ENCODE measurements at regions of chr9 and their contacts with region 1.

Region 1: DNA sequence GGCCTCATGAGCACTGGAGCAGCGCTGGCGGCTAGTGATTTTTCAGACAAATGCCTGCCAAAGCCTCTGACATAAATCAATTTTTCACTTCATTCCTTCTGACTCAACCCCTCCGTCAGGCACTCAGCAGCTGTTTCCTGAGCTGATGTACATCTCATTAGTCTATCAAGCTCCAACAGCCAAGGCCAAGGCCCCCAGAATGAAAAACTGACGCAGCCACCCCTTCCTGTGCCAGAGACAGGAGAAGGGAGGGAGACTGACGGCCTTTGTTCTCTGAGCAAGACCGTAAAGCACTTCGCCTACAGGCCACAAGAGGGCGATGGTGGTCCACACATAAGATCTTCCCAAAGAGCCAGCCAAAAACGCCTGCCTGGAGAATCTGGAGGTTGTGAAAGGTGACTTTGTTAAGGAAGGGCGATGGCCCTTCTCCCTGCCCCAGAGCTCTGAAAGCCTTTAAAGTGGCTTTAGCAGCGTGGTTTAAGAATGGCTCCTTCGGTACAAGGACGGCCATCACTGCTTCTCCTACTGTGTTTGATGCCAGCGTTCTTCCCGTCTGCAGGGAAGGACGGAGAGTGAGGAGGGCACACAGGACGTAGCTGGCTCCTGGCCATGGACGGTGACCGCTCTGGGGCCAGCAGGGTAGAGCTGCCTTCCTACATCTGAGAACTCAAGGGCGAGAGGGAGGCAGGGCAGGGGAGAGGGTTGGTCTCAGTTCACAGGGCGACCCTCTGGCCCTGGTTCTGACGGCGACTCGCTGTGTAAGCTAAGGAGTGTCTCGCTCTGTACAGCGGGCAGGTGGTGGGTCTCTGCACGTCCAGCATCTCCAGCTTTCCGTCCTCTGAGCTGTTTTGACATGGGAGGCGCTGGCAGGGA is 37.0 kb downstream of the ALG2 start:
- DNase-seq: peak; percentile 56 to 90 (median 80)
- ATAC-seq: peak; percentile 96
- H3K4me3 ChIP-seq: peak overlapping the region in 1 of 2 experiments; percentile 18
- H3K4me3 Mint-ChIP-seq: peak overlapping the region; percentile 41
- H3K27ac ChIP-seq: no peak overlapping the region
- H3K27ac Mint-ChIP-seq: peak overlapping the region; percentile 29
- H3K4me1 ChIP-seq: peaks cover 6% of the 10 kb centered on the region
- H3K4me1 Mint-ChIP-seq: peaks cover 15% of the 10 kb centered on the region
- H3K27me3 ChIP-seq: no peaks in the 10 kb centered on the region
- H3K27me3 Mint-ChIP-seq: no peaks in the 10 kb centered on the region
- CTCF ChIP-seq: peak; percentile 89

Region 2: DNA sequence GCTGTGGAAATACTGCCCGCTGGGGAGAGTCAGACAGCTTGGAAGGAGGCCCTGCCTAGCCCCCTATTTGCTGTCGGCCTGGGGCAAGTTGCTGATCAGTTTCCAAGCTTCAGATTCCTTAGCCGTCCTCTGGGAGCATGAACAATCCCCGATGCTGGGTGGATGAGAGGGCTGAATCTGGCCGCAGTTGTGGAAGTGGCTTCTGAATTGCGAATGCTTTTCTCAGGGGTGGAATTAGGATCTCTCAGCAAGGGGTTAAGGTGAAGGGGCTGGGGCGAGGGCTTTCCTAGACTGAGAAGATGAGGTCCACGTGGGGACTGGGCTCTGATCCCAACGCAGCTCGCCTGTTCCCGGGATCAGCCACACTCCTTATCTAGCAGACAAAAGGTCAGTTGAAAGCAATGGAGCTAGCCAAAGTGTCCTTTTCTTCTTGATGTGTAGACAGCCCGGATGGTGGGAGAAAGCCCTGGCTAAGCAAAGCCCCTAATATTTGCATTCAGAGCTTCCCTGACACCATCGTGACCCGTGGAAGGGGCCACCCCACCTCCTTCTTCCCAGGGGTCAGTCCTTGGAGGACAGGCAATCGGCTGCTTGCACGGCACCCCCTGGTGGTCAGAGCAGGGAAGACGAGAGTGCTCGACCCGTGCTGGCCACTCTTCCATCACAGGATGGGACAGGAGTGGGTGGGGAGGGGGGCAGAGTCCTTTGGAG is 186.1 kb before region 1 on chr9:
- CTCF ChIA-PET with region 1: interaction called, 14 read pairs
- POLR2A ChIA-PET with region 1: no interaction called
- intact Hi-C with region 1: loop called in 1 of 2 experiments (anchors 1 kb)
- DNase-seq: peak in 8 of 9 experiments; percentile 17 to 67 (median 60)
- ATAC-seq: peak; percentile 59
- H3K4me3 ChIP-seq: no peak overlapping the region
- H3K4me3 Mint-ChIP-seq: no peak overlapping the region
- H3K27ac ChIP-seq: no peak overlapping the region
- H3K27ac Mint-ChIP-seq: no peak overlapping the region
- H3K4me1 ChIP-seq: peaks cover 19% of the 10 kb centered on the region
- H3K4me1 Mint-ChIP-seq: peaks cover 17% of the 10 kb centered on the region
- H3K27me3 ChIP-seq: no peaks in the 10 kb centered on the region
- H3K27me3 Mint-ChIP-seq: no peaks in the 10 kb centered on the region
- CTCF ChIP-seq: peak; percentile 62

Region 3: GRCh38 chr9:99040911-99041582 is 143.7 kb before region 1 on chr9:
- CTCF ChIA-PET with region 1: no interaction called
- POLR2A ChIA-PET with region 1: no interaction called
- intact Hi-C with region 1: no loop called
- DNase-seq: peak in 2 of 9 experiments; percentile 18 to 27
- ATAC-seq: no peak
- H3K4me3 ChIP-seq: no peak overlapping the region
- H3K4me3 Mint-ChIP-seq: no peak overlapping the region
- H3K27ac ChIP-seq: peak overlapping the region in 1 of 2 experiments; percentile 20
- H3K27ac Mint-ChIP-seq: no peak overlapping the region
- H3K4me1 ChIP-seq: peaks cover 5% of the 10 kb centered on the region
- H3K4me1 Mint-ChIP-seq: peaks cover 18% of the 10 kb centered on the region
- H3K27me3 ChIP-seq: no peaks in the 10 kb centered on the region
- H3K27me3 Mint-ChIP-seq: peaks cover 2% of the 10 kb centered on the region
- CTCF ChIP-seq: no peak

Region 4: GRCh38 chr9:99085949-99086948 is 98.5 kb before region 1 on chr9:
- CTCF ChIA-PET with region 1: no interaction called
- POLR2A ChIA-PET with region 1: no interaction called
- intact Hi-C with region 1: no loop called
- DNase-seq: no peak
- ATAC-seq: no peak
- H3K4me3 ChIP-seq: no peak overlapping the region
- H3K4me3 Mint-ChIP-seq: no peak overlapping the region
- H3K27ac ChIP-seq: no peak overlapping the region
- H3K27ac Mint-ChIP-seq: no peak overlapping the region
- H3K4me1 ChIP-seq: no peaks in the 10 kb centered on the region
- H3K4me1 Mint-ChIP-seq: peaks cover 18% of the 10 kb centered on the region
- H3K27me3 ChIP-seq: no peaks in the 10 kb centered on the region
- H3K27me3 Mint-ChIP-seq: no peaks in the 10 kb centered on the region
- CTCF ChIP-seq: no peak

Region 5: GRCh38 chr9:99173570-99174504 is 10.9 kb before region 1 on chr9:
- CTCF ChIA-PET with region 1: interaction called, 43 read pairs
- POLR2A ChIA-PET with region 1: interaction called, 3 read pairs
- intact Hi-C with region 1: no loop called
- DNase-seq: no peak
- ATAC-seq: no peak
- H3K4me3 ChIP-seq: no peak overlapping the region
- H3K4me3 Mint-ChIP-seq: no peak overlapping the region
- H3K27ac ChIP-seq: no peak overlapping the region
- H3K27ac Mint-ChIP-seq: no peak overlapping the region
- H3K4me1 ChIP-seq: no peaks in the 10 kb centered on the region
- H3K4me1 Mint-ChIP-seq: no peaks in the 10 kb centered on the region
- H3K27me3 ChIP-seq: no peaks in the 10 kb centered on the region
- H3K27me3 Mint-ChIP-seq: no peaks in the 10 kb centered on the region
- CTCF ChIP-seq: no peak

Region 6: GRCh38 chr9:99563364-99563763 is 378.7 kb after region 1 on chr9:
- CTCF ChIA-PET with region 1: no interaction called
- POLR2A ChIA-PET with region 1: no interaction called
- intact Hi-C with region 1: no loop called
- DNase-seq: no peak
- ATAC-seq: no peak
- H3K4me3 ChIP-seq: no peak overlapping the region
- H3K4me3 Mint-ChIP-seq: no peak overlapping the region
- H3K27ac ChIP-seq: no peak overlapping the region
- H3K27ac Mint-ChIP-seq: no peak overlapping the region
- H3K4me1 ChIP-seq: no peaks in the 10 kb centered on the region
- H3K4me1 Mint-ChIP-seq: no peaks in the 10 kb centered on the region
- H3K27me3 ChIP-seq: no peaks in the 10 kb centered on the region
- H3K27me3 Mint-ChIP-seq: peaks cover 13% of the 10 kb centered on the region
- CTCF ChIP-seq: no peak

Region 7: GRCh38 chr9:100011062-100011681 is 826.5 kb after region 1 on chr9:
- CTCF ChIA-PET with region 1: interaction called, 4 read pairs
- POLR2A ChIA-PET with region 1: no interaction called
- intact Hi-C with region 1: loop called (anchors 2 to 5 kb)
- DNase-seq: peak in 7 of 9 experiments; percentile 6 to 77 (median 41)
- ATAC-seq: peak; percentile 54
- H3K4me3 ChIP-seq: no peak overlapping the region
- H3K4me3 Mint-ChIP-seq: no peak overlapping the region
- H3K27ac ChIP-seq: no peak overlapping the region
- H3K27ac Mint-ChIP-seq: no peak overlapping the region
- H3K4me1 ChIP-seq: no peaks in the 10 kb centered on the region
- H3K4me1 Mint-ChIP-seq: no peaks in the 10 kb centered on the region
- H3K27me3 ChIP-seq: no peaks in the 10 kb centered on the region
- H3K27me3 Mint-ChIP-seq: no peaks in the 10 kb centered on the region
- CTCF ChIP-seq: peak; percentile 82

Region 8: DNA sequence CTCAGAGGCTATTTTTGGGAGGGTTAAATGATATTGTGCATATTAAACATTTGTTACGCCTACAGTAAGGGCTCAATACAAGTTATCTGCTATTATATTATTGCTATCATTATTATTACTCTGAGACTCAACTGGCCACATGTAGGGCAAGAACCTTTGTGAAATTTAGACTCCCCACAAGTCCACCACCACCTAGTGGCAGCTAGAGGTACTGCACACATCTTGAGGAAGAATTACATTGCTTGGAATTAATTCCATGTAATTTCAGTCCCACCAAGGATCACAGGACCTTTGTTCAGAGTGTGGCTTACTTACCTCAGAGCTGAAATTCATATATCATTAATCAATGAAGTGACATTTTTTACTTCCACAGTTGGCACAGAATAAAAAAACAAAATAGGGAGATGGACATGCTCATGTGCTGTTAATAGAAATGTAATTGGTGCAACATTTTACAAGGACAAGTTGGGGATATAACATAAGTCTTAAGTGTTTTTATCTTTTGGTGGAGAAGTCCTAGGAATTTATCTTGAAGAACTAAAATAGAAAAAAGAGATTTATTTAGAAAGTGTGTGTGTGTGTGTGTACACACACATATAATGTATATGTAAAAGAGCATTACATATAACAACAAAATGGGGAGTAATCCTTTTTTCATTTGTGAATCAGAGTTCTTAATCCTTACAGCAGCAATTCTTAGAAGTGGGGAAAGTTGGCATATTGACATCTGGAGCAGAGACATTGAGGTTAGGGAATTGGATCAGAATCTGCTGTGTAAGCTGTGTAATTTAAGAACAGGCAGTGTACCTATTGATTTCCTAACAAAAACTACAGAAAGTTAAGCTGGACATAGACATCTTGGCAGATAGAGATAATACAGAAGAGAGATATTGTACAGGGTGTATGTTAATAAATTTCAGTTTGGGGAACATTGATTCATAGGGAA is 1253.4 kb after region 1 on chr9:
- CTCF ChIA-PET with region 1: no interaction called
- POLR2A ChIA-PET with region 1: no interaction called
- intact Hi-C with region 1: loop called in 1 of 2 experiments (anchors 10 kb)
- DNase-seq: peak; percentile 33 to 77 (median 72)
- ATAC-seq: peak; percentile 80
- H3K4me3 ChIP-seq: no peak overlapping the region
- H3K4me3 Mint-ChIP-seq: no peak overlapping the region
- H3K27ac ChIP-seq: no peak overlapping the region
- H3K27ac Mint-ChIP-seq: no peak overlapping the region
- H3K4me1 ChIP-seq: no peaks in the 10 kb centered on the region
- H3K4me1 Mint-ChIP-seq: peaks cover 2% of the 10 kb centered on the region
- H3K27me3 ChIP-seq: no peaks in the 10 kb centered on the region
- H3K27me3 Mint-ChIP-seq: no peaks in the 10 kb centered on the region
- CTCF ChIP-seq: peak; percentile 90